Activated naive CD4-positive, alpha-beta T cell treated with anti-CD3 and anti-CD28 coated beads for 36 hours (primary cell): ENCODE measurements at regions of chr22 and their contacts with region 1.

Region 1: GRCh38 chr22:25057013-25057881 is 104.7 kb downstream of the KIAA1671 start:
- DNase-seq: peak; percentile 91
- H3K4me3 Mint-ChIP-seq: no peak overlapping the region
- H3K27ac Mint-ChIP-seq: no peak overlapping the region
- H3K4me1 Mint-ChIP-seq: peaks cover 49% of the 10 kb centered on the region
- H3K27me3 Mint-ChIP-seq: no peaks in the 10 kb centered on the region

Region 2: DNA sequence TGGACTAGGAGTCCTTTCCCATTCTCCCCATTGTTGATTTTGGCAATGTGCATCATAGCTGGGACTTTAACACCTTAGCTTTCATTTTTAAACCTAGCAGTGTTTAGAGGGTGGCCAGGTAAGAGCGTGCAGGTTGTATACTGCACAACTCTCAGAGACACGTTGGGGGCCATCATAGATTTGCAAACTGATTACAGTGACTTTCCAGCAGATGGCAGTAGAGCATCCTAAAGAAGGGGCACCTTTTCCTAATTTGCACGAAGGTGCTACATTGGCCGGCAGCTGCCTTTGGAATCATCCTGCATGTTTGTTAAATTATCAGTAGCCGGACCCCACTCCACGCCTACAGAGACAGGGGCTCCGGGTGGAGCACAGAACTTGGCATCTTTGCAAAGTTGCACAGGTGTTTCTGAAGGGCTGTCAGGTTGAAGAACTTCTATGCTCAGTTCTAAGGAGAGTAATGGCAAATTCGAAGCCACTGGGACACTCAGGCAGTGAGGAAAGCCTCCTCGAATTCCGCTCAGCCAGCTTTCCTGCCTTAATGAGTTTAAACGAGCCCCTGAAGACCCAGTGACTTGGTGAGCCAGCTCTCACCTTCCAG is 118.4 kb before region 1 on chr22:
- CTCF ChIA-PET with region 1: interaction called, 11 read pairs
- intact Hi-C with region 1: no loop called
- DNase-seq: peak; percentile 33
- H3K4me3 Mint-ChIP-seq: no peak overlapping the region
- H3K27ac Mint-ChIP-seq: no peak overlapping the region
- H3K4me1 Mint-ChIP-seq: no peaks in the 10 kb centered on the region
- H3K27me3 Mint-ChIP-seq: peaks cover 2% of the 10 kb centered on the region

Region 3: DNA sequence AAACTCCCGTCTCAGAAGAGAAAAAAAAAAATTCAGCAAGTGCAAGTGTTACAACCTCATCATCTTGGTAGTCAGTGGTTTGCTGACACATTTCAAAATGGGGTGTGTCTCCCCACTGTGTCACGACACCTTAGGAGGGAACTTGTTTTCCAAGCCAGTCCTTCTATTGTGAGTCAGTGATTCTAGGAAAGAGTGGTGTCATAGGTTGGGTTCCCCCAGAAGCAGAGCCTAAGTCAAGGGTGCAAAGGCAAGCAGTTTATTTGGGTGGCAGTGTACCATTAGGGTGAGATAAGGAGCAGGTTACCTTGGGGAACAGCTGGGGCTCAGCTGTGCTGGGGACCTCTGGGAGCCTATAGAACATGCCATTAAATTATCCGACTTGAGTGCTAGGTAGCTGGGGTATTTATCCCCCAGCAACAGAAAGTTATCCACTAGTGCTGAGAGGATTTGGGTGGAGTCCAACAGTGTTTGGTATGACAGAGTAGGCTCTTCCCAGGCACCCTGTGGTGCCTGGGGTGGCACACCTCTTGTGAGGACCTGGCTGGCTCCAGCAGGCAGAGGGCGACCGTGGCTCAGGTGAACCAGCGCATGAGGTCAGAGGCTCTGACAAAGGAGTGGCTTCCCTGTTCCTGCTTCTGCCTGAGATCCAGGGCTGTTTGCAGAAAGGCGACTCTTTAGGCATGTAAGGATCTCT is 63.0 kb before region 1 on chr22:
- CTCF ChIA-PET with region 1: no interaction called
- intact Hi-C with region 1: loop called (anchors 5 kb)
- DNase-seq: peak; percentile 55
- H3K4me3 Mint-ChIP-seq: no peak overlapping the region
- H3K27ac Mint-ChIP-seq: no peak overlapping the region
- H3K4me1 Mint-ChIP-seq: peaks cover 6% of the 10 kb centered on the region
- H3K27me3 Mint-ChIP-seq: peaks cover 9% of the 10 kb centered on the region

Region 4: GRCh38 chr22:25076336-25076735 is 19.1 kb after region 1 on chr22:
- CTCF ChIA-PET with region 1: interaction called, 20 read pairs
- intact Hi-C with region 1: loop called (anchors 1 kb)
- DNase-seq: peak; percentile 82
- H3K4me3 Mint-ChIP-seq: peak overlapping the region; percentile 43
- H3K27ac Mint-ChIP-seq: peak overlapping the region; percentile 87
- H3K4me1 Mint-ChIP-seq: peaks cover 63% of the 10 kb centered on the region
- H3K27me3 Mint-ChIP-seq: no peaks in the 10 kb centered on the region

Region 5: GRCh38 chr22:25110846-25111578 is 53.8 kb after region 1 on chr22:
- CTCF ChIA-PET with region 1: interaction called, 9 read pairs
- intact Hi-C with region 1: loop called (anchors 1 kb)
- DNase-seq: peak; percentile 62
- H3K4me3 Mint-ChIP-seq: peak overlapping the region; percentile 75
- H3K27ac Mint-ChIP-seq: no peak overlapping the region
- H3K4me1 Mint-ChIP-seq: peaks cover 25% of the 10 kb centered on the region
- H3K27me3 Mint-ChIP-seq: peaks cover 2% of the 10 kb centered on the region

Region 6: GRCh38 chr22:25362215-25362882 is 305.1 kb after region 1 on chr22:
- CTCF ChIA-PET with region 1: no interaction called
- intact Hi-C with region 1: no loop called
- DNase-seq: peak; percentile 83
- H3K4me3 Mint-ChIP-seq: no peak overlapping the region
- H3K27ac Mint-ChIP-seq: no peak overlapping the region
- H3K4me1 Mint-ChIP-seq: no peaks in the 10 kb centered on the region
- H3K27me3 Mint-ChIP-seq: no peaks in the 10 kb centered on the region